Activated CD8-positive, alpha-beta T cell treated with anti-CD3 and anti-CD28 coated beads for 36 hours (primary cell): ENCODE measurements at regions of chr12 and their contacts with region 1.

Region 1: DNA sequence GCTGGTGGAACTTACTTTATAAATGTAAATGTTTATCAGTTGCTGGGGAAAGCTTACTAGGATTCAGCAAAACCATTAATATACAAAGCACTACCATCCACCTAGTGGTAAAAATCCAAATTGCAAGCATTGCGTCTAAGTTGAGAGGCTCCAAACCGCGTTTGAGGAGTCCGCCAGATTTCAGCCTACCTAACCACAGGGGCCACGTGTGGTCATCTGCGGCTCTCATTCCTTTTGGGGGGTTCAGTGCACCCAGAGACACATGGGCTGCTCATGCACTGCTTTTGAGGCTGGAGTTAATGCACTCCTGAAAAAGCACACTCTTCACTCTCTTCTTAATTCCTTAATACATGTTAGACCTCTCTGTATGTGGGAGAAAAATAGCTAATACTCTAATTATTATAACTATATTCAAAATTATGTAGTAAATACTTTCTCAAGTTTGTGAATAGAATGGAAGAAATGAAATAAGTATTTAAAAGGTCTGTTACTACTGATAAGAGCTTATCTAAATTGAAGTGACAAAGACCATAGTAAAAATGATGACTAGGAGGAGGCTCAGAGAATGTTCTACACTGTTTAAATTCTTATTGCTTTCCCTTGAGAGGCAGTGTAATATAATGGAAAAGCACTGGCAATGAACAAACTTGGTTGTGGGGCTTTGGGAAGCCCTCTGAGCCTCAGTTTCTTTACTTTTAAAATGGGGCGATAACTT is 41.4 kb upstream of the MANSC4 start:
- DNase-seq: peak; percentile 49
- ATAC-seq: peak; percentile 13
- H3K4me3 Mint-ChIP-seq: no peak overlapping the region
- H3K27ac Mint-ChIP-seq: no peak overlapping the region
- H3K4me1 Mint-ChIP-seq: peaks cover 33% of the 10 kb centered on the region
- H3K27me3 Mint-ChIP-seq: peaks cover 29% of the 10 kb centered on the region
- CTCF ChIP-seq: peak; percentile 97

Region 2: GRCh38 chr12:27733052-27733656 is 88.3 kb before region 1 on chr12:
- CTCF ChIA-PET with region 1: interaction called, 44 read pairs
- POLR2A ChIA-PET with region 1: interaction called, 3 read pairs
- intact Hi-C with region 1: loop called (anchors 1 kb)
- DNase-seq: peak; percentile 47
- ATAC-seq: peak; percentile 79
- H3K4me3 Mint-ChIP-seq: no peak overlapping the region
- H3K27ac Mint-ChIP-seq: no peak overlapping the region
- H3K4me1 Mint-ChIP-seq: no peaks in the 10 kb centered on the region
- H3K27me3 Mint-ChIP-seq: no peaks in the 10 kb centered on the region
- CTCF ChIP-seq: peak; percentile 82

Region 3: GRCh38 chr12:27779920-27780611 is 41.4 kb before region 1 on chr12 and contains the starts of genes KLHL42 and MANSC4:
- CTCF ChIA-PET with region 1: interaction called, 11 read pairs
- POLR2A ChIA-PET with region 1: interaction called, 19 read pairs
- intact Hi-C with region 1: loop called (anchors 2 kb)
- DNase-seq: peak; percentile 67
- ATAC-seq: peak; percentile 78
- H3K4me3 Mint-ChIP-seq: peak within 1 kb of the TSS; percentile 83
- H3K27ac Mint-ChIP-seq: peak within 1 kb of the TSS; percentile 84
- H3K4me1 Mint-ChIP-seq: peaks cover 33% of the 10 kb centered on the region
- H3K27me3 Mint-ChIP-seq: no peaks in the 10 kb centered on the region
- CTCF ChIP-seq: no peak
- total RNA-seq, gene KLHL42: 10.2 to 11.3 TPM
- total RNA-seq, gene MANSC4: not detected

Region 4: GRCh38 chr12:27787559-27787958 is 33.9 kb before region 1 on chr12:
- CTCF ChIA-PET with region 1: interaction called, 55 read pairs
- POLR2A ChIA-PET with region 1: no interaction called
- intact Hi-C with region 1: loop called (anchors 2 kb)
- DNase-seq: no peak
- ATAC-seq: no peak
- H3K4me3 Mint-ChIP-seq: no peak overlapping the region
- H3K27ac Mint-ChIP-seq: no peak overlapping the region
- H3K4me1 Mint-ChIP-seq: peaks cover 36% of the 10 kb centered on the region
- H3K27me3 Mint-ChIP-seq: no peaks in the 10 kb centered on the region
- CTCF ChIP-seq: no peak

Region 5: DNA sequence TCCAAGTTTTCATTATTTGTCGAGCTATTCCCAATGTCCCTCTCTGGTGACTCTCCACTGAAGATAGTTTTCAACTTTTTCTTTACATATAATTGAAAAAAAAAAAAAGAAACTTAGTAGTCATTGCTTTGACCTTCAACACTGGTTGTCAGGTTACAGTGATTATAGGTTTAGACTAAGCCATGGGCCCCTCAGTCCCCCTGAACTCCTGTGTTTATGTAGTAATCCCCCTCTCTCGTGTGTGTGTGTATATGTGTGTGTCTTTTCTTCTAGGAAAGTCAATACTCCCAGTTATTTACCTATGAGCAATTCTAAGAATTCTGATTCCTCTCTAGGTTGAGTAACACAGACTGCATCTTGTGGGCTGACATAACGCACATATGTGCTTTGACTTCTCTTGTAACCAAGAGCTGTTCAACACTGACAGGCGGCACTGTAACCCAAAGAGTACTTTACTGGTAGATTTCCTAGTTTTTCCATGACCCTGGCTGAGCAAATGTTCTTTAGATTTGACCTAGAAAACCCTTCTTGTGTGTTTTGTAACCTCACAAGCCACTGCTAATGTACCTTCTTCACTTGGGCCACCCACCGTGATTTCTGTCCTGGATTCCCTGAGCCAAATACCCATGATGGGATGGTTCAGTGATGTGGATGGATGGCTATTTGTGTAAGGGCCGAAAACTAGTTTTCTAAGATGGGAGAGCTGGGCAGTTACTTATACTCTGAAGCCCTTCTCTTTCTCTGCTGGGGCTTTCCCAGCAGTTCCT is 26.4 kb before region 1 on chr12:
- CTCF ChIA-PET with region 1: interaction called, 55 read pairs
- POLR2A ChIA-PET with region 1: interaction called, 5 read pairs
- intact Hi-C with region 1: no loop called
- DNase-seq: no peak
- ATAC-seq: peak; percentile 82
- H3K4me3 Mint-ChIP-seq: no peak overlapping the region
- H3K27ac Mint-ChIP-seq: peak overlapping the region; percentile 81
- H3K4me1 Mint-ChIP-seq: peaks cover 25% of the 10 kb centered on the region
- H3K27me3 Mint-ChIP-seq: no peaks in the 10 kb centered on the region
- CTCF ChIP-seq: no peak

Region 6: DNA sequence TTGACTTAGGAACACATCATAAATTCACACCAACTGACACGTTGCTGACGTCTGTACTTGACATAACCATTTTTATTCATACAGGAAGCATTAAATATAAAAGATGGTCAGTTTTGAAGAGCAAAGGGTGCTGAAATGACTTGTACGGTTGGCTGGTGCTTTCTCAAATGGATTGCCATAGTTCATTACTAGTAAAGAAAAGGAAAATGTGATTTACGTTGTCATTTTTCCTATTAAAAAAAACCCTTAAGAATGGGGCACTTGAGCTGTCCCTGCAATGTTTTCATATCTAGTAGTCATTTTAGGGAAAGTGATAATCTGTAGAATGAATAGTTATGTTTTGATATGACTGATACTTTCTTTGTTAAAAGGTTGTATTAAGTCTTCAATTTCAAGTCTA is 18.9 kb before region 1 on chr12:
- CTCF ChIA-PET with region 1: interaction called, 55 read pairs
- POLR2A ChIA-PET with region 1: interaction called, 10 read pairs
- intact Hi-C with region 1: loop called (anchors 2 kb)
- DNase-seq: peak; percentile 45
- ATAC-seq: peak; percentile 54
- H3K4me3 Mint-ChIP-seq: no peak overlapping the region
- H3K27ac Mint-ChIP-seq: peak overlapping the region; percentile 89
- H3K4me1 Mint-ChIP-seq: peaks cover 59% of the 10 kb centered on the region
- H3K27me3 Mint-ChIP-seq: no peaks in the 10 kb centered on the region
- CTCF ChIP-seq: no peak

Region 7: DNA sequence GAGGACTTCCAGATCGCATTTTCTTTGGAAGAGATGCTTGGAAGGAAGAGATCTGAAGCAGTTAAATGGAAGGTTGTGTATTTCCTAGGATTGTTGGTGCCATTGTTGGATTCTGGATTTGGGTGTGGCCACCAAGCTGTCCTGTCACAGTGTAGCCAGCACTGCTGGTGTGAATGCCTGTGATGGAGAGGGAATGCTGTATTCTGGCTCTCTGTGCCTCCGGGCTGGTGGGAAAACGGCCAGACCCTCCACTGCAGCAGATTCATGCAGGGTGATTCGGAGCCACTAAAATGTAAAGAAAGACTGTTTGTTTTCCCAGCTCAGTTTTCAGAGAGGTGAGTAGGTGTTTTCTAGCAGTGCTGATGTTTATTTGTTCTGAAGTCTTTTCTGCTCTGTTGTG is 10.7 kb before region 1 on chr12:
- CTCF ChIA-PET with region 1: interaction called, 44 read pairs
- POLR2A ChIA-PET with region 1: interaction called, 10 read pairs
- intact Hi-C with region 1: loop called (anchors 2 kb)
- DNase-seq: no peak
- ATAC-seq: no peak
- H3K4me3 Mint-ChIP-seq: no peak overlapping the region
- H3K27ac Mint-ChIP-seq: no peak overlapping the region
- H3K4me1 Mint-ChIP-seq: peaks cover 32% of the 10 kb centered on the region
- H3K27me3 Mint-ChIP-seq: peaks cover 20% of the 10 kb centered on the region
- CTCF ChIP-seq: no peak

Region 8: GRCh38 chr12:27868139-27868538 is 46.7 kb after region 1 on chr12:
- CTCF ChIA-PET with region 1: no interaction called
- POLR2A ChIA-PET with region 1: no interaction called
- intact Hi-C with region 1: no loop called
- DNase-seq: no peak
- ATAC-seq: no peak
- H3K4me3 Mint-ChIP-seq: no peak overlapping the region
- H3K27ac Mint-ChIP-seq: no peak overlapping the region
- H3K4me1 Mint-ChIP-seq: peaks cover 10% of the 10 kb centered on the region
- H3K27me3 Mint-ChIP-seq: no peaks in the 10 kb centered on the region
- CTCF ChIP-seq: no peak